ENCODE measurements at regions of chr11 and their contacts with region 1.

Region 1: DNA sequence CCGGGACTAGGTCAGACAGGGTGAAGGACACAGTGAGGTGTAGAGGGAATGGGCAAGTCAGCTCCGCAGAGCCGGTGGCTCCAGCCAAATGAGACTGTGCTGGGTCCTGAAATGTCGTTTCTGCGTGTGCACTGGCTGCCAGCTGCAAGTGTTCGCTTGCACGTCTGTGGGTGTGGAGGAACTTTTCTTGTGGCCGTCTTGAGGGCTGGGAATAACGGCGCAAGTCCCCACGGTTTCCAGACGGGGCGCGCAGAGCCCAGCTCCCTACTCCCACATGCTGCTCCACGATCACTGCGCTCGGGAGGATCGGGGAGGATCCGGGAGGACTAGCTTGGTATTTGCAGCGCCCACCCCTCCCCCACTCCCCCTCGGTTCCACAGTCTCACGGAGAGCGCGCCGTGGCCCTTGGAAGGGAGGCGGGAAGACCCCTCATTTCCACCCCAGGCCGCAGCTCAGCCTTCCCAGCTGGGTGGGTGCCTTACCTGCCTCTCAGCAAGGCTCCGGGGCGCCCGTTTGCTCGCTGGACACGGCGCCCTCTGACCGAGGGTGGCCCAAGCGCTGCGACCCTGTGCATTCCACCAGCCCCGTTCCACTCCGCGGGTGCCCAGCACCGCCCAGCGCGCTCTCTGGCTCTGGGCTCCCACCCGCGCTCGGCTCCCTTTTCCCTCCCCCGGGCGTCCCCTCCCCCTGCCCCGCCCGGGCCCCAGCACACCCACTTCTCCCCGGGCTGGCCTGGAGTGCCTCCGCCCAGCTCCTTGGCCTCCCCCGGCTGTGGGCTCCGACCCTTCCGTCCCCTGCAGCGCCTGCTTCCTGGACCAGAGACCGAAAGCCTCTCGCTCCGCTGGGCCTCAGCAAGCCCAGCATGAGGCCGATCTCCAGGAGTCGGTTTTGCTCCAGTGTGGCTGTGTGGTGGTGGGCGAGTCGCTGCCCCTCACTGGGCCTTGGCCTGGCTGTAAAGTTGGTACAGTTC is at the start of gene KCNE3:
- DNase-seq: peak; percentile 72 to 82
- ATAC-seq: peak; percentile 73
- H3K4me3 ChIP-seq: peak within 1 kb of the TSS in 1 of 2 donors; percentile 43
- H3K27ac ChIP-seq: no peak within 1 kb of the TSS
- H3K4me1 ChIP-seq: no peaks in the 10 kb centered on the region
- H3K27me3 ChIP-seq: no peaks in the 10 kb centered on the region
- total RNA-seq, gene KCNE3: 3.8 to 12.5 TPM

Region 2: DNA sequence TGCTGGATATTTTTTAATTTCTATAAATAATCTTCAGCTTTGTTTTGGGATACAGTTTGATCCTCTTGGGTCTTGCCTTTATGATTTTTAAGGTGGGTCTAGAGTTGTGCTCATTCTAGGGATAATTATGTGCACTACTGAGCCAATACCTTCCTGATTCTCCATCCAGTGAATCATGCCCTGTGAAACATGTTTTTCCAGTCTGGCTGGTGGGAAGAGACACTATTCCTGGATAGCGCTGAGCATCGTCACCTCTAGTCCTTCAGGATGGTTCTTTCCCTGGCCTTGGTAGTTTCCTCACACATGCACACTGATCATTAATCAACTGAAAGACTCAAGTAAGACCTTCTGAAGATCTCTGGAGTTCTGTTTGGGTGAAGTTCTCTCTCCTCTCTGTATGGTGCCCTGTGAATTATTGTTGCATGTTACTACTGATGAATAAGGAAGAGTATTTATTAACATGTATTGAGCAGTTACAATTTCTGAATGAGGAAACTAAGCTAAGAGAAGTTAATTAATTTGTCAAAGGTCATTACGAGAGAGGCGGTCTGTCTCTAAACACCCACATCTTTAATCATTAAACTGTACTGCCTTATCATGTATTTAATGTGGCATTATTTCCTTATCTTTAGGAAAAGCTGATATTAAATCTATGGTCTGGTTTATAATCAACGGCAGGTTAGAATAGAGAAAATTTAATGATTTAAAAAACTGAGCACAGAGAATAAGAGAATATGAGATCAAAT is 65.5 kb after region 1 on chr11:
- intact Hi-C with region 1: no loop called
- DNase-seq: no peak
- ATAC-seq: no peak
- H3K4me3 ChIP-seq: no peak overlapping the region
- H3K27ac ChIP-seq: no peak overlapping the region
- H3K4me1 ChIP-seq: no peaks in the 10 kb centered on the region
- H3K27me3 ChIP-seq: no peaks in the 10 kb centered on the region

Region 3: GRCh38 chr11:74570266-74571061 is 103.3 kb after region 1 on chr11:
- intact Hi-C with region 1: loop called in 1 of 2 experiments (anchors 10 kb)
- DNase-seq: no peak
- ATAC-seq: no peak
- H3K4me3 ChIP-seq: no peak overlapping the region
- H3K27ac ChIP-seq: no peak overlapping the region
- H3K4me1 ChIP-seq: no peaks in the 10 kb centered on the region
- H3K27me3 ChIP-seq: no peaks in the 10 kb centered on the region

Measured in aorta (tissue), 5 donors.